K562 (cell line): ENCODE measurements at regions of chr2 and their contacts with region 1.

Region 1: GRCh38 chr2:119414894-119415293 is 16.8 kb upstream of the TMEM37 start:
- DNase-seq: no peak
- ATAC-seq: no peak
- H3K4me3 ChIP-seq: no peak overlapping the region
- H3K27ac ChIP-seq: no peak overlapping the region
- H3K4me1 ChIP-seq: no peaks in the 10 kb centered on the region
- H3K27me3 ChIP-seq: peaks cover 4 to 9% of the 10 kb centered on the region in 2 experiments; a peak in 3 of 5 replicates
- CTCF ChIP-seq: no peak
- EP300 ChIP-seq: no peak
- POLR2A ChIP-seq: no peak
- RAD21 ChIP-seq: no peak

Region 2: GRCh38 chr2:119142824-119143223 is 272.1 kb before region 1 on chr2:
- CTCF ChIA-PET with region 1: no interaction called
- POLR2A ChIA-PET with region 1: no interaction called
- in situ Hi-C with region 1: no loop called
- intact Hi-C with region 1: no loop called
- DNase-seq: no peak
- ATAC-seq: no peak
- H3K4me3 ChIP-seq: no peak overlapping the region
- H3K27ac ChIP-seq: no peak overlapping the region
- H3K4me1 ChIP-seq: no peaks in the 10 kb centered on the region
- H3K27me3 ChIP-seq: peaks cover 8 to 40% of the 10 kb centered on the region in 2 experiments; a peak in 3 of 5 replicates
- CTCF ChIP-seq: no peak
- EP300 ChIP-seq: no peak
- POLR2A ChIP-seq: no peak
- RAD21 ChIP-seq: no peak

Region 3: DNA sequence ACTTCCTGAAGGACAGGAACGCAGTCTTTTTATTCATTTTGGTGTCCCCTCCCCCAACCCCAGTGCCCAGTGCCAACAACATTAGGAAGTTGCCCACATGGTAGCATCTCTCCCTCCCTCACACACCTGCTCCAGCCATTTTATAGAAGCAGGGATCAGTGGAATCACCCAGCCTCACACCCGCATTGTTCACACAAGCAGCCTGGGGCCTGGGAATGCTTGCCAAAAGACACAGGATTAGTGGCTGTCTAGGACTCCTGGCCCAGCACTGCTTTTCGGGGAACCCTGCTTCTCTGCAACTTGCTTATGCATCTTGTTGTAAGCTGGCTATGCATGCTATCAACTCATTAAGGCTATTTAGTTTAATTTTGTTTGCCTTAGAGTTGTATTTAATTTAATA is 34.6 kb after region 1 on chr2:
- CTCF ChIA-PET with region 1: interaction called, 3 read pairs
- POLR2A ChIA-PET with region 1: no interaction called
- in situ Hi-C with region 1: no loop called
- intact Hi-C with region 1: loop called (anchors 5 kb)
- DNase-seq: no peak
- ATAC-seq: no peak
- H3K4me3 ChIP-seq: no peak overlapping the region
- H3K27ac ChIP-seq: no peak overlapping the region
- H3K4me1 ChIP-seq: no peaks in the 10 kb centered on the region
- H3K27me3 ChIP-seq: peaks cover 30 to 62% of the 10 kb centered on the region in 2 experiments
- CTCF ChIP-seq: no peak
- EP300 ChIP-seq: no peak
- POLR2A ChIP-seq: no peak
- RAD21 ChIP-seq: no peak

Region 4: GRCh38 chr2:119468154-119468955 is 53.5 kb after region 1 on chr2:
- CTCF ChIA-PET with region 1: no interaction called
- POLR2A ChIA-PET with region 1: no interaction called
- in situ Hi-C with region 1: loop called (anchors 5 kb)
- intact Hi-C with region 1: no loop called
- DNase-seq: no peak
- ATAC-seq: no peak
- H3K4me3 ChIP-seq: no peak overlapping the region
- H3K27ac ChIP-seq: no peak overlapping the region
- H3K4me1 ChIP-seq: no peaks in the 10 kb centered on the region
- H3K27me3 ChIP-seq: peaks cover 7 to 28% of the 10 kb centered on the region in 2 experiments; a peak in 4 of 5 replicates
- CTCF ChIP-seq: no peak
- EP300 ChIP-seq: no peak
- POLR2A ChIP-seq: no peak
- RAD21 ChIP-seq: no peak

Region 5: DNA sequence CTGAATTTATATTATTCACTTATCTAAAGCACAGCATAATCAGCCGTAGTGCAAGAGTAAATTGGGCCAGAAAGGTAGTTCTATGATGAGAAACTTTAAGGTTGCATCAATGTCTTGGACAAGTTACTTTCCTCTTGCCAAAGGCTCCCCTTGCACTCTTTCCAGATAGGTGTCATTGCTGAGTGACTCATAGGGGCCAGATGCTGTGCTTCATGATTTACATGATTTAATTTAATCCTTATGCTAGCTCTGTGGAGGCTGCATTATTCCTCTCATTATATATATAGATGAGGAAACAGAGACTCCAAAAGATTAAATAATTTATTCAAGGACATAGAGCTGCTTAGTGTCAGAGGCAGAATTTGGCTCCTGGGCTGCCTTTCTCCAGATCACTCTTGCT is 134.3 kb after region 1 on chr2:
- CTCF ChIA-PET with region 1: no interaction called
- POLR2A ChIA-PET with region 1: no interaction called
- in situ Hi-C with region 1: no loop called
- intact Hi-C with region 1: no loop called
- DNase-seq: no peak
- ATAC-seq: no peak
- H3K4me3 ChIP-seq: no peak overlapping the region
- H3K27ac ChIP-seq: no peak overlapping the region
- H3K4me1 ChIP-seq: peaks cover 13 to 14% of the 10 kb centered on the region in 2 experiments
- H3K27me3 ChIP-seq: no peaks in the 10 kb centered on the region
- CTCF ChIP-seq: no peak
- EP300 ChIP-seq: no peak
- POLR2A ChIP-seq: no peak
- RAD21 ChIP-seq: no peak

Region 6: GRCh38 chr2:120132190-120132589 is 717.3 kb after region 1 on chr2:
- CTCF ChIA-PET with region 1: no interaction called
- POLR2A ChIA-PET with region 1: no interaction called
- in situ Hi-C with region 1: no loop called
- intact Hi-C with region 1: no loop called
- DNase-seq: peak in 1 of 4 experiments; percentile 6
- ATAC-seq: no peak
- H3K4me3 ChIP-seq: no peak overlapping the region
- H3K27ac ChIP-seq: no peak overlapping the region
- H3K4me1 ChIP-seq: no peaks in the 10 kb centered on the region
- H3K27me3 ChIP-seq: no peaks in the 10 kb centered on the region
- CTCF ChIP-seq: no peak
- EP300 ChIP-seq: no peak
- POLR2A ChIP-seq: no peak
- RAD21 ChIP-seq: no peak